Mammary epithelial cell (primary cell): ENCODE measurements at regions of chr11 and their contacts with region 1.

Region 1: DNA sequence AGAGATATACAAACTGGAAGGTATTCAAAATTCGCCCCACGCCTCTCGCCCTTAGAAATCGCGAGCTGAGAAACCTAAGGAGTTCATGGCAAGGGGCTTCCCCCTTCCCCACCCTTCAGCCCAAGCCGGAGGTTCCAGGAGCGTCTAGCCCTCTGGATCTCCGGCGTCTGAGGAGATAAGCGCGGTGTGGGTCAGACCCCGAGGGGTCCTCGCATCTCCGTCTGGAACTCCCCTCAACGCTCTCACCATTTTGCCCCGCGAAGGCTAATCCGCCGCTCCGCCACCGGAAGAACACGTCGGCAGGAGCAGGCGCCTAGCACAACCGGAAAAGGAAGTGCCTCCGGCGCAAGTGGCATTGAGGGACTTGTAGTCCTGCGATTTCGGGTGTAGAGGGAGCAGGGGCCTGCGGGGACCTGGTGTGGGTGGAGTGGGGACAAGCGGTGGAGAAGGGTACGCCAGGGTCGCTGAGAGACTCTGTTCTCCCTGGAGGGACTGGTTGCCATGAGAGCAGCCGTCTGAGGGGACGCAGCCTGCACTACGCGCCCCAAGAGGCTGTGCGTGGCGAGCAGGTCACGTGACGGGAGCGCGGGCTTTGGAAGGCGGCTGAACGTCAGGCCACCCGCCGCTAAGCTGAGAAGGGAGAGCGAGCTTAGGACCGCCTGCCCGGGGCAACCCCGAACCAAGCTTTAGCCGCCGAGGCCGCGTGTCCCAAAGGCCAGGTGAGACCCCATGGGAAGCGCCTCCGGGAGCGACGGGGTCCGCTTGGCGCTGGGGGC is at the starts of genes FEN1 and TMEM258:
- DNase-seq: peak; percentile 95
- H3K4me3 ChIP-seq: peak within 1 kb of the TSS; percentile 63 to 93 (median 92)
- H3K27ac ChIP-seq: peak within 1 kb of the TSS; percentile 96
- H3K4me1 ChIP-seq: peaks cover 13% of the 10 kb centered on the region
- H3K27me3 ChIP-seq: no peaks in the 10 kb centered on the region
- CTCF ChIP-seq: no peak
- total RNA-seq, gene FEN1: 11.7 to 46.1 TPM
- total RNA-seq, gene TMEM258: 48.2 to 99.7 TPM

Region 2: DNA sequence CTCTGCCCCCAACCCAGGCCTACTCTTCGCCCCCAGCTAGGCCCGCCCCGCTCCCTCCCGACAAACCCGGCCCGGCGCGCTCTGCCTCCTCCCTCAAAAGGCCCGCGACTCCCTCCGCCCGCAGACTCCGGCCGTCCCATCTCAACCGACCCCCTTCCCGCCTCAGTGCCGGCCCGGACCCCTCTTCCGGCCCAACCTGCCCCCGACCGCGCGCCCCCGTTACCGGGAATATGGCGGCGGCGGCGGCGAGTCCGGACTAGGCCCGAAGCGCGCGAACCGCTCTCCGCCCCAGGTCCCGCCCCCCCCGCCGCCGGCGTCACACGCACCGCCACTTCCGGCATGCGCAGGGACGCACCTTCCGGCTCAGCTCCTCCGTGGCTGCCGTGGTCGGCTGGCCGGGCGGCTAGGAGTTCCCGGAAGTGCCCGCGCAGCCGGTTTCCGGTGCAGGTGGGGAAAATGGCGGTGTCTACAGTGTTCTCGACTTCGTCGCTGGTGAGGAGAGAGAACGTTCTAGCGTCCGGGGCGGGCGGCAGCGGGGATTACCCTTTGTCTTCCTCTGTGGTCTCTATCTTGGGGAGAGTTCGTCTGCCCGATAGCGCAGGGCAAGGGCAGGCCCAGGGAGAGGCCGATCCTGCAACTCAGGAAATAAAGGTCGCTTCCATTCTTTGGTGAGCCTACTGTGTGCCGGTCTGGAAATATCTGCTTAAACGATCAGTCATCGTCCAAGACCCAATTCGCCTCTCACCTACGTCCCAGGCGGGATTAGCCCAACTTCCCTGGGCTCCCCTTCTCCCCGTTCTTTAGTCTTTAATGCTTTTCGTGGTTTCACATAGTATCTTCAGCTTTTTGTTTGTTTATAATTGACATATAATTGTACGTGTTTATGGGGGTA is 362.6 kb before region 1 on chr11 and contains the starts of genes CPSF7 and SDHAF2:
- CTCF ChIA-PET with region 1: no interaction called
- dilution Hi-C with region 1: no loop called
- in situ Hi-C with region 1: no loop called
- intact Hi-C with region 1: no loop called
- DNase-seq: peak; percentile 96
- H3K4me3 ChIP-seq: peak within 1 kb of the TSS; percentile 58 to 93 (median 78)
- H3K27ac ChIP-seq: peak within 1 kb of the TSS; percentile 77
- H3K4me1 ChIP-seq: peaks cover 23% of the 10 kb centered on the region
- H3K27me3 ChIP-seq: no peaks in the 10 kb centered on the region
- CTCF ChIP-seq: no peak
- total RNA-seq, gene CPSF7: 27.2 to 77.7 TPM
- total RNA-seq, gene SDHAF2: 21.7 to 48.2 TPM

Region 3: GRCh38 chr11:61816736-61817455 is 24.4 kb after region 1 on chr11 and contains the start of gene FADS1:
- CTCF ChIA-PET with region 1: interaction called, 4 read pairs
- dilution Hi-C with region 1: no loop called
- in situ Hi-C with region 1: no loop called
- intact Hi-C with region 1: loop called (anchors 2 kb)
- DNase-seq: peak; percentile 73
- H3K4me3 ChIP-seq: peak within 1 kb of the TSS; percentile 52 to 66 (median 64)
- H3K27ac ChIP-seq: peak within 1 kb of the TSS; percentile 68
- H3K4me1 ChIP-seq: peaks cover 50% of the 10 kb centered on the region
- H3K27me3 ChIP-seq: no peaks in the 10 kb centered on the region
- CTCF ChIP-seq: peak; percentile 20 to 60
- total RNA-seq, gene FADS1: 32.9 to 38.8 TPM

Region 4: DNA sequence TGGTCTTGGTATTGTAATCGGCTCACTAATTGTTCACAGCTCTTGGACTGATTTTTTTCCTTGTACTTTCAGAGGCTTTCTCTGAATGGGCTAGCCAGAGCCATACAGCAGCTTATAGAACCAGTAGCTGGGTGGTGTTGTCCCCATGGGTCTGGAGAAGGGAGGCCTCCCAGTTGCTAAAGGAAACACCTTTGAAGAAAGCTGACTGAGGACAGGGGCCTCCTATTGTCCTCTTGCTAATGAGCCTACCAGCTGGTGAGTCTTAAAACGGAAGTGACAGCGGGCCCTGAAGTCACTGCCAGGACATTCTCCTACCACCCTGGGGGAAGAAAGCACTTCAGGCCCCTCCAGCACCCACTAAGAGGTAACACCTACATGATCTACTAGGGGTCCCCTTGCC is 88.9 kb after region 1 on chr11:
- CTCF ChIA-PET with region 1: no interaction called
- dilution Hi-C with region 1: loop called (anchors 5 kb)
- in situ Hi-C with region 1: no loop called
- intact Hi-C with region 1: no loop called
- DNase-seq: no peak
- H3K4me3 ChIP-seq: no peak overlapping the region
- H3K27ac ChIP-seq: no peak overlapping the region
- H3K4me1 ChIP-seq: no peaks in the 10 kb centered on the region
- H3K27me3 ChIP-seq: no peaks in the 10 kb centered on the region
- CTCF ChIP-seq: no peak

Region 5: GRCh38 chr11:61967116-61967923 is 174.8 kb after region 1 on chr11 and contains the start of gene FTH1:
- CTCF ChIA-PET with region 1: no interaction called
- dilution Hi-C with region 1: no loop called
- in situ Hi-C with region 1: no loop called
- intact Hi-C with region 1: loop called (anchors 5 kb)
- DNase-seq: peak; percentile 90
- H3K4me3 ChIP-seq: peak within 1 kb of the TSS; percentile 64 to 98 (median 92)
- H3K27ac ChIP-seq: peak within 1 kb of the TSS; percentile 94
- H3K4me1 ChIP-seq: peaks cover 46% of the 10 kb centered on the region
- H3K27me3 ChIP-seq: no peaks in the 10 kb centered on the region
- CTCF ChIP-seq: no peak
- total RNA-seq, gene FTH1: 2,122 to 4,396 TPM

Region 6: GRCh38 chr11:62081378-62082291 is 289.1 kb after region 1 on chr11:
- CTCF ChIA-PET with region 1: interaction called, 14 read pairs
- dilution Hi-C with region 1: no loop called
- in situ Hi-C with region 1: no loop called
- intact Hi-C with region 1: loop called (anchors 1 kb)
- DNase-seq: peak; percentile 57
- H3K4me3 ChIP-seq: no peak overlapping the region
- H3K27ac ChIP-seq: no peak overlapping the region
- H3K4me1 ChIP-seq: peaks cover 6% of the 10 kb centered on the region
- H3K27me3 ChIP-seq: no peaks in the 10 kb centered on the region
- CTCF ChIP-seq: peak; percentile 82 to 91